ENCODE measurements at regions of chr9 and their contacts with region 1.

Region 1: GRCh38 chr9:107299437-107299836 is 16.4 kb downstream of the RAD23B start:
- DNase-seq: no peak
- ATAC-seq: no peak
- H3K4me3 ChIP-seq: no peak overlapping the region
- H3K27ac ChIP-seq: no peak overlapping the region
- H3K4me1 ChIP-seq: peaks cover 5 to 52% (median 35%) of the 10 kb centered on the region in 12 donors
- H3K27me3 ChIP-seq: no peaks in the 10 kb centered on the region
- CTCF ChIP-seq: peak in 4 of 12 donors; percentile 10 to 21 (median 16)
- POLR2A ChIP-seq: no peak

Region 2: GRCh38 chr9:107251756-107252322 is 47.6 kb before region 1 on chr9:
- intact Hi-C with region 1: loop called in 1 of 10 experiments (anchors 2 kb)
- DNase-seq: peak in 4 of 5 donors; percentile 40 to 69 (median 60)
- ATAC-seq: peak; percentile 95 to 99 (median 98)
- H3K4me3 ChIP-seq: no peak overlapping the region
- H3K27ac ChIP-seq: peak overlapping the region in 9 of 12 donors; percentile 10 to 70 (median 52)
- H3K4me1 ChIP-seq: peaks cover 0 to 26% (median 8%) of the 10 kb centered on the region in 12 donors
- H3K27me3 ChIP-seq: no peaks in the 10 kb centered on the region
- CTCF ChIP-seq: no peak
- POLR2A ChIP-seq: no peak

Measured in heart left ventricle (tissue), 16 donors.